ENCODE measurements at regions of chr12 and their contacts with region 1.

Region 1: GRCh38 chr12:92145731-92146496 is at the start of gene BTG1:
- DNase-seq: peak; percentile 100
- H3K4me3 Mint-ChIP-seq: peak within 1 kb of the TSS; percentile 89
- H3K27ac Mint-ChIP-seq: peak within 1 kb of the TSS; percentile 74
- H3K4me1 Mint-ChIP-seq: peaks cover 16% of the 10 kb centered on the region
- H3K27me3 Mint-ChIP-seq: no peaks in the 10 kb centered on the region
- CTCF ChIP-seq: no peak
- total RNA-seq, gene BTG1: 128 and 129 TPM in 2 replicates

Region 2: DNA sequence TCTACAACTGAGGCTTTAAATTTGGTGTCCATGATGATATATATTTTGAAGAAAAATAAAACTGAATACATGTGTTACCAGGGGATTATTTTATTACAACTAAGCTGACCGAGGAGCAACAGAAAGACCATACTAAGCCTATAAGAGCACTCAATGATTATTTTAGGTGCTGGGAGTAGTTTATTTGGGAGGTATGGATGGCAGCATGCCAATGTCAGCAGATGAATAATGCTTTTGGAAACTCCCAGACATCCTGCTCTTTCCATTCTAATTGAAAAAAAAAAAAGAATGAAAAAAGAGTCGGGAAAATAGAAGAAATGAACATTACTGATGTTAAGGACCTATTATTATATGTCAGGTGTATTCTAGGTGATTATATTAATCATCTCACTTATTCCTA is 441.5 kb before region 1 on chr12:
- CTCF ChIA-PET with region 1: no interaction called
- POLR2A ChIA-PET with region 1: interaction called, 7 read pairs
- intact Hi-C with region 1: loop called (anchors 10 kb)
- DNase-seq: peak; percentile 89
- H3K4me3 Mint-ChIP-seq: no peak overlapping the region
- H3K27ac Mint-ChIP-seq: peak overlapping the region; percentile 62
- H3K4me1 Mint-ChIP-seq: peaks cover 26% of the 10 kb centered on the region
- H3K27me3 Mint-ChIP-seq: no peaks in the 10 kb centered on the region
- CTCF ChIP-seq: no peak

Region 3: GRCh38 chr12:91926848-91927247 is 219.1 kb before region 1 on chr12:
- CTCF ChIA-PET with region 1: no interaction called
- POLR2A ChIA-PET with region 1: interaction called, 16 read pairs
- intact Hi-C with region 1: loop called (anchors 1 kb)
- DNase-seq: peak; percentile 57
- H3K4me3 Mint-ChIP-seq: no peak overlapping the region
- H3K27ac Mint-ChIP-seq: peak overlapping the region; percentile 75
- H3K4me1 Mint-ChIP-seq: peaks cover 18% of the 10 kb centered on the region
- H3K27me3 Mint-ChIP-seq: no peaks in the 10 kb centered on the region
- CTCF ChIP-seq: no peak

Region 4: GRCh38 chr12:92162079-92162478 is 16.2 kb after region 1 on chr12:
- CTCF ChIA-PET with region 1: interaction called, 3 read pairs
- POLR2A ChIA-PET with region 1: interaction called, 22 read pairs
- intact Hi-C with region 1: no loop called
- DNase-seq: no peak
- H3K4me3 Mint-ChIP-seq: no peak overlapping the region
- H3K27ac Mint-ChIP-seq: no peak overlapping the region
- H3K4me1 Mint-ChIP-seq: peaks cover 10% of the 10 kb centered on the region
- H3K27me3 Mint-ChIP-seq: no peaks in the 10 kb centered on the region
- CTCF ChIP-seq: no peak

Region 5: GRCh38 chr12:92505254-92506231 is 359.6 kb after region 1 on chr12:
- CTCF ChIA-PET with region 1: no interaction called
- POLR2A ChIA-PET with region 1: interaction called, 13 read pairs
- intact Hi-C with region 1: no loop called
- DNase-seq: no peak
- H3K4me3 Mint-ChIP-seq: no peak overlapping the region
- H3K27ac Mint-ChIP-seq: no peak overlapping the region
- H3K4me1 Mint-ChIP-seq: peaks cover 28% of the 10 kb centered on the region
- H3K27me3 Mint-ChIP-seq: no peaks in the 10 kb centered on the region
- CTCF ChIP-seq: no peak

Region 6: GRCh38 chr12:92608151-92609091 is 462.5 kb after region 1 on chr12:
- CTCF ChIA-PET with region 1: interaction called, 5 read pairs
- POLR2A ChIA-PET with region 1: interaction called, 12 read pairs
- intact Hi-C with region 1: no loop called
- DNase-seq: peak; percentile 70
- H3K4me3 Mint-ChIP-seq: no peak overlapping the region
- H3K27ac Mint-ChIP-seq: no peak overlapping the region
- H3K4me1 Mint-ChIP-seq: peaks cover 11% of the 10 kb centered on the region
- H3K27me3 Mint-ChIP-seq: no peaks in the 10 kb centered on the region
- CTCF ChIP-seq: peak; percentile 47

Measured in MCF 10A (cell line).